ENCODE measurements at regions of chr14 and their contacts with region 1.

Region 1: GRCh38 chr14:69129264-69129880 is 23.5 kb downstream of the DCAF5 start:
- DNase-seq: peak; percentile 70 to 75 (median 71)
- H3K4me3 ChIP-seq: no peak overlapping the region
- H3K4me3 Mint-ChIP-seq: peak overlapping the region in 3 of 8 donors; percentile 42 to 50 (median 46)
- H3K27ac ChIP-seq: no peak overlapping the region
- H3K27ac Mint-ChIP-seq: peak overlapping the region; percentile 16 to 89 (median 61)
- H3K4me1 ChIP-seq: peaks cover 63% of the 10 kb centered on the region
- H3K4me1 Mint-ChIP-seq: peaks cover 48 to 81% (median 66%) of the 10 kb centered on the region in 4 donors
- H3K27me3 ChIP-seq: no peaks in the 10 kb centered on the region
- H3K27me3 Mint-ChIP-seq: no peaks in the 10 kb centered on the region

Region 2: GRCh38 chr14:68843471-68844209 is 285.7 kb before region 1 on chr14:
- CTCF ChIA-PET with region 1: no interaction called
- POLR2A ChIA-PET with region 1: no interaction called
- intact Hi-C with region 1: no loop called
- DNase-seq: peak; percentile 61 to 72 (median 66)
- H3K4me3 ChIP-seq: no peak overlapping the region
- H3K4me3 Mint-ChIP-seq: peak overlapping the region in 4 of 8 donors; percentile 39 to 75 (median 55)
- H3K27ac ChIP-seq: no peak overlapping the region
- H3K27ac Mint-ChIP-seq: peak overlapping the region in 4 of 7 donors; percentile 11 to 72 (median 59)
- H3K4me1 ChIP-seq: peaks cover 28% of the 10 kb centered on the region
- H3K4me1 Mint-ChIP-seq: peaks cover 18 to 37% (median 26%) of the 10 kb centered on the region in 4 donors
- H3K27me3 ChIP-seq: no peaks in the 10 kb centered on the region
- H3K27me3 Mint-ChIP-seq: peaks cover 1 to 2% of the 10 kb centered on the region in 2 donors

Region 3: DNA sequence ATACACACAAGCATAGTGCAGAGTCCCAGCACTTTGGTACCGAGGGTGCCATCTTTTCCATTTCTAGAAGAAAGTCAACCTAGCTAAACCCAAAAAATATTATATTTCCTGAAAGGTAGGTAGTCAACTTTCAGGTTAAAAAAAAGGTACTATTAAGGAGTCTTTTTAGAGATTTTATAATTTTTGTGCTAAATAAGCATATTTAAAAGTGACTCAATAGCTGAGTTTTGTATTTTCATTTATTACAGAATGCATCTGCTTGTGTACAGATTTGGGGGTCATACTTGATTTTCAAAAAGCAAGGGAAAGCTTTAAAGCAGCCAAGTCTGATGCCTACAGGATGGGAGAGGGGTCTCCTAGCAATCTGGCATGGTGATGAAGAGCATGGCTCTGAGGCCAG is 11.1 kb before region 1 on chr14:
- CTCF ChIA-PET with region 1: interaction called, 13 read pairs
- POLR2A ChIA-PET with region 1: no interaction called
- intact Hi-C with region 1: no loop called
- DNase-seq: no peak
- H3K4me3 ChIP-seq: no peak overlapping the region
- H3K4me3 Mint-ChIP-seq: no peak overlapping the region
- H3K27ac ChIP-seq: no peak overlapping the region
- H3K27ac Mint-ChIP-seq: peak overlapping the region in 6 of 7 donors; percentile 46 to 81 (median 72)
- H3K4me1 ChIP-seq: peaks cover 17% of the 10 kb centered on the region
- H3K4me1 Mint-ChIP-seq: peaks cover 33 to 55% (median 39%) of the 10 kb centered on the region in 4 donors
- H3K27me3 ChIP-seq: no peaks in the 10 kb centered on the region
- H3K27me3 Mint-ChIP-seq: no peaks in the 10 kb centered on the region

Region 4: GRCh38 chr14:69142101-69142500 is 12.7 kb after region 1 on chr14:
- CTCF ChIA-PET with region 1: interaction called, 24 read pairs
- POLR2A ChIA-PET with region 1: interaction called, 3 read pairs
- intact Hi-C with region 1: no loop called
- DNase-seq: no peak
- H3K4me3 ChIP-seq: no peak overlapping the region
- H3K4me3 Mint-ChIP-seq: no peak overlapping the region
- H3K27ac ChIP-seq: no peak overlapping the region
- H3K27ac Mint-ChIP-seq: peak overlapping the region in 1 of 7 donors; percentile 47
- H3K4me1 ChIP-seq: peaks cover 37% of the 10 kb centered on the region
- H3K4me1 Mint-ChIP-seq: peaks cover 33 to 74% (median 53%) of the 10 kb centered on the region in 4 donors
- H3K27me3 ChIP-seq: no peaks in the 10 kb centered on the region
- H3K27me3 Mint-ChIP-seq: no peaks in the 10 kb centered on the region

Region 5: DNA sequence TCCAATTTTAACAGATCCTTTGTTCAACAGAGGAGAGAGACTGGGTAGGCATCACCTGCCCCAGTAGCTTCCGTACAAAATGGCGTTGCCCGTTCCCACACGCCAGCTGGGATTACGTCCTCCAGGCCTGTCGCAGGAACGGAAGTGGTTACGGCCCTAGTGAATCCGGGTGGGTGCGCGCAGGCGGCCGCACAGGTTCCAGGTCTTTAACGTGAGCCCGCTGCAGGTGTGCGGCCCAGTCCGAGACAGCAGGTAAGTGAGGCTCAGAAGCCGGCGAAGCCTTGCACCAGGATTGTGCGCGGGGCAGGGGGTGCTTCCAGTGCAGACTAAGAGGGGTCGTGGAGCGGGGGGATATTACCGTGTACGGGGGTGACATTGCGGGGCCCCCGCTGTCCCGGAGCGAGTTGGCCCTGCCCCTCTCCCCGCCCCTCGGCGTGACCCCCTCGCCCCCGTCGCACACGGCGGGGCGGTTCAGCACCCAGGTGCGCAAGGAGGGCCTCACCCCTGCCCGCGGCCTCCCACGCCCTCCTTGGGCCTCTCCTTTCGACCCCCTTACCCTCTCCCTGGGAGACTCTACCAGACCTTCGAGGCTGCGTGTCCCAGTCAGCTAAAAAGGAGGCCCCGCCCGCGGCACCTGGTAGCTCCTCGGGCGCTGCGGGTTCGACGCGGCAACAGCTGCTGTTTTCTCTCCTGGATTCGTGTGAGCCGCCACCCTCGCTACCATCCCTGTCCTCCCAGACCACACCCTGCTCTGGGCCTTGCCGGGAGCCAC is 62.2 kb after region 1 on chr14 and contains the start of gene EXD2:
- CTCF ChIA-PET with region 1: interaction called, 10 read pairs
- POLR2A ChIA-PET with region 1: interaction called, 5 read pairs
- intact Hi-C with region 1: loop called (anchors 1 kb)
- DNase-seq: peak; percentile 48 to 74 (median 65)
- H3K4me3 ChIP-seq: peak within 1 kb of the TSS; percentile 55 to 84
- H3K4me3 Mint-ChIP-seq: peak within 1 kb of the TSS; percentile 91 to 97 (median 94)
- H3K27ac ChIP-seq: peak within 1 kb of the TSS; percentile 50
- H3K27ac Mint-ChIP-seq: peak within 1 kb of the TSS; percentile 82 to 94 (median 92)
- H3K4me1 ChIP-seq: peaks cover 10% of the 10 kb centered on the region
- H3K4me1 Mint-ChIP-seq: peaks cover 15 to 26% (median 23%) of the 10 kb centered on the region in 4 donors
- H3K27me3 ChIP-seq: no peaks in the 10 kb centered on the region
- H3K27me3 Mint-ChIP-seq: no peaks in the 10 kb centered on the region
- total RNA-seq, gene EXD2: 14.3 to 15.7 TPM

Region 6: GRCh38 chr14:69242311-69243224 is 113.2 kb after region 1 on chr14:
- CTCF ChIA-PET with region 1: interaction called, 27 read pairs
- POLR2A ChIA-PET with region 1: no interaction called
- intact Hi-C with region 1: loop called (anchors 1 kb)
- DNase-seq: peak; percentile 47 to 58 (median 55)
- H3K4me3 ChIP-seq: no peak overlapping the region
- H3K4me3 Mint-ChIP-seq: no peak overlapping the region
- H3K27ac ChIP-seq: no peak overlapping the region
- H3K27ac Mint-ChIP-seq: no peak overlapping the region
- H3K4me1 ChIP-seq: no peaks in the 10 kb centered on the region
- H3K4me1 Mint-ChIP-seq: peaks cover 1 to 6% (median 5%) of the 10 kb centered on the region in 4 donors
- H3K27me3 ChIP-seq: no peaks in the 10 kb centered on the region
- H3K27me3 Mint-ChIP-seq: no peaks in the 10 kb centered on the region

Region 7: GRCh38 chr14:69460093-69460701 is 330.8 kb after region 1 on chr14:
- CTCF ChIA-PET with region 1: interaction called, 25 read pairs
- POLR2A ChIA-PET with region 1: no interaction called
- intact Hi-C with region 1: loop called (anchors 1 kb)
- DNase-seq: peak; percentile 42 to 51 (median 49)
- H3K4me3 ChIP-seq: no peak overlapping the region
- H3K4me3 Mint-ChIP-seq: no peak overlapping the region
- H3K27ac ChIP-seq: no peak overlapping the region
- H3K27ac Mint-ChIP-seq: no peak overlapping the region
- H3K4me1 ChIP-seq: no peaks in the 10 kb centered on the region
- H3K4me1 Mint-ChIP-seq: no peaks in the 10 kb centered on the region
- H3K27me3 ChIP-seq: no peaks in the 10 kb centered on the region
- H3K27me3 Mint-ChIP-seq: no peaks in the 10 kb centered on the region

Region 8: GRCh38 chr14:69574263-69574953 is 445.0 kb after region 1 on chr14 and contains the start of gene CCDC177:
- CTCF ChIA-PET with region 1: no interaction called
- POLR2A ChIA-PET with region 1: no interaction called
- intact Hi-C with region 1: loop called (anchors 1 kb)
- DNase-seq: peak; percentile 63 to 73 (median 65)
- H3K4me3 ChIP-seq: peak within 1 kb of the TSS in 1 of 2 donors; percentile 48
- H3K4me3 Mint-ChIP-seq: peak within 1 kb of the TSS; percentile 83 to 95 (median 90)
- H3K27ac ChIP-seq: no peak within 1 kb of the TSS
- H3K27ac Mint-ChIP-seq: peak within 1 kb of the TSS in 1 of 7 donors; percentile 61
- H3K4me1 ChIP-seq: peaks cover 13% of the 10 kb centered on the region
- H3K4me1 Mint-ChIP-seq: peaks cover 6 to 29% (median 11%) of the 10 kb centered on the region in 4 donors
- H3K27me3 ChIP-seq: peaks cover 23% of the 10 kb centered on the region
- H3K27me3 Mint-ChIP-seq: peaks cover 36% of the 10 kb centered on the region in 2 donors
- total RNA-seq, gene CCDC177: not detected

Measured in CD4-positive, alpha-beta memory T cell (primary cell).